Activated naive CD4-positive, alpha-beta T cell treated with anti-CD3 and anti-CD28 coated beads for 36 hours (primary cell): ENCODE measurements at regions of chr1 and their contacts with region 1.

Region 1: GRCh38 chr1:176206961-176207902 is at the start of gene COP1:
- DNase-seq: peak; percentile 97
- H3K4me3 Mint-ChIP-seq: peak within 1 kb of the TSS; percentile 98
- H3K27ac Mint-ChIP-seq: peak within 1 kb of the TSS; percentile 98
- H3K4me1 Mint-ChIP-seq: peaks cover 30% of the 10 kb centered on the region
- H3K27me3 Mint-ChIP-seq: no peaks in the 10 kb centered on the region
- total RNA-seq, gene COP1: 37.4 to 37.6 TPM

Region 2: DNA sequence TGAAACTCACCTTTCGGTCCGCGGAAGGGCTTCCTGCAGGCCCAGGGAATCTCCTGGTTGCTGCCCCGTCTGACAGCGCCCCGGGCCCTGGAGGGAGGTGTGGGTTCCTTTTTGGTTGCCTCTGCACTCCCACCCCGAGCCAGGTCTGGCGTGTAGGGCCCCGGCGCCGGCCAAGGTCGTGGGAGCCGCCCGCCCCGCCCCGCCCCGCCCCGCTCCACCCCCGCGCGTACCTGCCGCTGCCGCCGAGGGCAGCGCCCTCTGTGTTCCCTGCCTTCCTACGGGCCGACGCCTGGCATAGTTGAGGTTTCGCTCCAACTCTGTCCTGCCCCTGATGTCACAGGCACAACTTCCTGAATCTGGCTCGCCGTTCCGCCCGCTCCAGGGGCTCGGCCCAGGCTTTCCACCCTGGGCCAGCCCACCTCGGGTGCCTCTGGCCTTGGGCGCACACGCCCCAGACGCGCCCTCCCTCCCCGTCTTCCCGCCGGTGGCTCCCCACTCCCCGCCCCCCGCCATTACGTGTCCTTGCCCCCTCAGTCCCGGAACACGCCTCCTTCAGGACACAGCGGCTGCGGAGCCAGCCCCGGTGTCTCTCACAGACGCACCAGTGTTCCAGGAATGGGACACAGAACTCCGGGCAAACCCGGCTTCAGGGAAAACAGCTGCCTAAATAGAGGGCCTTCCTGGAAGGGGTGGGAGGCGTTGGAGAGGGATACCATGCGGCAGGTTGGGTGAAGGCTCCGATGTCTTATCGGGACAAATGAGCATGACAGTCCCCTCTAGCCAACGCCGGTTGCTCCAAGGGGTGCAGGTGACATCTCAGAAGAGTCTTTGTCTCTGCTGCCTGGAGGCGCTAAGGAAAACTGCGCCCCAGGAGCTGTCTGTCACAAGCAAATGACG is 1014.4 kb before region 1 on chr1 and contains the start of gene KIAA0040:
- CTCF ChIA-PET with region 1: no interaction called
- intact Hi-C with region 1: loop called (anchors 2 kb)
- DNase-seq: peak; percentile 63
- H3K4me3 Mint-ChIP-seq: peak within 1 kb of the TSS; percentile 92
- H3K27ac Mint-ChIP-seq: peak within 1 kb of the TSS; percentile 93
- H3K4me1 Mint-ChIP-seq: peaks cover 45% of the 10 kb centered on the region
- H3K27me3 Mint-ChIP-seq: no peaks in the 10 kb centered on the region
- total RNA-seq, gene KIAA0040: 19.5 to 21.4 TPM

Region 3: GRCh38 chr1:176122282-176122681 is 85.0 kb before region 1 on chr1:
- CTCF ChIA-PET with region 1: no interaction called
- intact Hi-C with region 1: loop called (anchors 5 kb)
- DNase-seq: no peak
- H3K4me3 Mint-ChIP-seq: no peak overlapping the region
- H3K27ac Mint-ChIP-seq: no peak overlapping the region
- H3K4me1 Mint-ChIP-seq: peaks cover 11% of the 10 kb centered on the region
- H3K27me3 Mint-ChIP-seq: no peaks in the 10 kb centered on the region

Region 4: DNA sequence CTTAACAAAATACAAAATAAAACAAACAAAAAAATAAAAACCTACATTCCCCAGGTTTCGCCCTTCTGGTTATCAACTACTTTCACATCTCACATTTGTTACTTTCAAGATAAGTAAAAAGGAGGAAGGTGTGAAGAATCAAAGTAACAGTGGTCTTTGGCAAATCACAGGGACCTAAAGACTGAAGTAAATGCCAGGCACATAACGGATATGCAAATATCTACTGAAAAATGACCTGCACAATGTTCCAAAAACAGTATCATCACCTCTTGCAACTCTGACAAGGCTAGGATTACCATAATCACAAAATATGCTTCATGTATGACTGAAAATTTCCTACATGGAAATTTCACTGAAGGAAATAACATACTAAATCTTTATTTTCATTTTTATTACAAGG is 29.5 kb before region 1 on chr1:
- CTCF ChIA-PET with region 1: no interaction called
- intact Hi-C with region 1: loop called (anchors 1 kb)
- DNase-seq: no peak
- H3K4me3 Mint-ChIP-seq: peak overlapping the region; percentile 2
- H3K27ac Mint-ChIP-seq: peak overlapping the region; percentile 82
- H3K4me1 Mint-ChIP-seq: peaks cover 51% of the 10 kb centered on the region
- H3K27me3 Mint-ChIP-seq: no peaks in the 10 kb centered on the region

Region 5: DNA sequence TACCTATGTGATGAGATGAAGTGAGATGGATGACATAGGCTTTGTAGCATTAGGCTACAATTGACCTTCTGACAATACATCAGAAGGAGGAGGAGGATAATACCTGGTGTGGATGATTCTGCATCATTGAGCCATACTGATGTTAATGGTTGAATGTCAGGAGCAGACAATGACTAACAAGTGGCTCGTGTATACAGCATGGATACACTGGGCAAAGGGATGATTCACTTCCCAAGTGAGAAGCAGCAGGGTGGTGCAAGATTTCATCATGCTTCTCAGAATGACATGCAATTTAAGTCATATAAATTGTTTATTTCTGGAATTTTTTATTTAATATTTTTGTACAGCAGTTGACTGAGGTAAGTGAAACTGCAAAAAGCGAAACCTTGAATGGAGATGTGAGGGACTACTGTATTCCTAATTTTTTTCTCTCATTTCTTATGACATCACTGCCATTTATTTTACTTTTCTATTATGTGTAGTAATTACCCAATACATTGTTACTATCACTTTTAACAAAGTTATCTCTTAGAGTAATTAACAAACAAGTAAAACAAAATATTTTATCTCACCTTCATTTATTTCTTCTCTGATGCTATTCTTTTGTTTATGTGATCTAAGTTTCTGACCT is 34.3 kb after region 1 on chr1:
- CTCF ChIA-PET with region 1: no interaction called
- intact Hi-C with region 1: loop called (anchors 1 kb)
- DNase-seq: peak; percentile 65
- H3K4me3 Mint-ChIP-seq: no peak overlapping the region
- H3K27ac Mint-ChIP-seq: peak overlapping the region; percentile 61
- H3K4me1 Mint-ChIP-seq: peaks cover 10% of the 10 kb centered on the region
- H3K27me3 Mint-ChIP-seq: peaks cover 13% of the 10 kb centered on the region